IMR-90 (cell line): ENCODE measurements at regions of chr3 and their contacts with region 1.

Region 1: GRCh38 chr3:120013481-120013880 is 80.8 kb downstream of the GSK3B start:
- DNase-seq: peak; percentile 19
- ATAC-seq: peak; percentile 42; the same call in 1 of the 2 replicates
- H3K4me3 ChIP-seq: no peak overlapping the region
- H3K27ac ChIP-seq: no peak overlapping the region
- H3K4me1 ChIP-seq: peaks cover 5% of the 10 kb centered on the region
- H3K27me3 ChIP-seq: no peaks in the 10 kb centered on the region
- CTCF ChIP-seq: no peak
- POLR2A ChIP-seq: no peak
- RAD21 ChIP-seq: no peak

Region 2: DNA sequence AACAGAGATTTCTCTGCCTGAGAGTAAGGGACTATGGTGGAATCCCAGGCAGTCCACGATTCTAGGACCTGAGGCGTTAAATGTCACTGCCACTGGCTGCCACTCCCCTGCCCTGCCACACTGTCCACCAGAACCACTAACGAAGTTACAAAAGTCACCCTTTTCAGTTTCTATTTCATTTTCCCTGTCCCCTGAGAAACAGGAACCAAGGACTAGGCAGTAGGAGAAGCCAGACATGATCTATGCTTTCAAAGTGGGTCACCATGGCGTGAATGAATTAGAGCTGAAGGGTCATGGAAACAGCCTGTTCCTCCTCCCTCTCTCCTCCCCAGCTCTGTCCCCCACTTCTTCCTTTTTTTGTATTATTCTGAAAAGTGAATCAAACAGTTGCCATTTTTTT is 443.3 kb before region 1 on chr3:
- CTCF ChIA-PET with region 1: no interaction called
- POLR2A ChIA-PET with region 1: no interaction called
- dilution Hi-C with region 1: no loop called
- in situ Hi-C with region 1: no loop called
- intact Hi-C with region 1: no loop called
- DNase-seq: no peak
- ATAC-seq: no peak
- H3K4me3 ChIP-seq: no peak overlapping the region
- H3K27ac ChIP-seq: no peak overlapping the region
- H3K4me1 ChIP-seq: no peaks in the 10 kb centered on the region
- H3K27me3 ChIP-seq: peaks cover 4% of the 10 kb centered on the region
- CTCF ChIP-seq: no peak
- POLR2A ChIP-seq: no peak
- RAD21 ChIP-seq: no peak

Region 3: GRCh38 chr3:119969759-119970158 is 43.7 kb before region 1 on chr3:
- CTCF ChIA-PET with region 1: no interaction called
- POLR2A ChIA-PET with region 1: no interaction called
- dilution Hi-C with region 1: no loop called
- in situ Hi-C with region 1: no loop called
- intact Hi-C with region 1: loop called (anchors 5 kb)
- DNase-seq: no peak
- ATAC-seq: no peak
- H3K4me3 ChIP-seq: no peak overlapping the region
- H3K27ac ChIP-seq: no peak overlapping the region
- H3K4me1 ChIP-seq: no peaks in the 10 kb centered on the region
- H3K27me3 ChIP-seq: no peaks in the 10 kb centered on the region
- CTCF ChIP-seq: no peak
- POLR2A ChIP-seq: no peak
- RAD21 ChIP-seq: no peak

Region 4: DNA sequence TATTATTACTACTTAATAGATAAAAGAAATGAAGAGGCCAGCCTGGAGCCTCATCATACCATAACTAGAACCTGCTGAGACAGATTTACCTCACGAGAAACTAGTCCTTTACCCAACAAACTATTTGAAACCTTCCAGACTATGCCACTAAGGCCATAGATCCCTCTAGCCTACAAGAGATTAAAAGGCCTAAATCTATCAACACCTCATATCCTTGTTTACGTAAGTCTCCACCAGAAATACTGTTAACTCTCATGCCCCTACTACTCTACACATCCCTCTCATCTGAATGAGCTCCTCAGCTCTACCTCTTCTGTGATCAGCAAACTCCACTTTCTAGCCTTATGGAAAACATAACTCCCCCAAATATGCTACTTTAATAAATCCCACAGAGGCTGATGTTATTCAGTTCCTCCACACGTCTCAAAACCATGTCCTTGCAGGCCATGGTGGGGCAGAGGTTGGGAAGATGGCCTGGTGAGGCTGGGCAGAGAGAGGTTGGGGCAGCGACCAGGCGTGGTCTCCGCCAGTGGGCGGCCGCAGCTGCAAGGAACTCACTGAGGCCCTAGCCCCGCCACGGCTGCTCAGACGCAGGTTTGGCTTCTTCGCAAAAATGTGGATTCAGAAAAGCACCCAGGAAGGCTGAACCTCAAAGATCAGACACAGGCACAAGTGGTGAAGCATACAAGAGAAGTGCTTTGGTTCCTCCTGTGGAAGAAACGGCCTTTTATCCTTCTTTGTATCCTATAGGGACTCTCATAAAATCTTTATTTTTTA is 15.0 kb after region 1 on chr3:
- CTCF ChIA-PET with region 1: no interaction called
- POLR2A ChIA-PET with region 1: interaction called, 17 read pairs
- dilution Hi-C with region 1: no loop called
- in situ Hi-C with region 1: no loop called
- intact Hi-C with region 1: no loop called
- DNase-seq: no peak
- ATAC-seq: no peak
- H3K4me3 ChIP-seq: no peak overlapping the region
- H3K27ac ChIP-seq: no peak overlapping the region
- H3K4me1 ChIP-seq: no peaks in the 10 kb centered on the region
- H3K27me3 ChIP-seq: no peaks in the 10 kb centered on the region
- CTCF ChIP-seq: no peak
- POLR2A ChIP-seq: no peak
- RAD21 ChIP-seq: no peak